T-cell (primary cell): ENCODE measurements at regions of chr4 and their contacts with region 1.

Region 1: DNA sequence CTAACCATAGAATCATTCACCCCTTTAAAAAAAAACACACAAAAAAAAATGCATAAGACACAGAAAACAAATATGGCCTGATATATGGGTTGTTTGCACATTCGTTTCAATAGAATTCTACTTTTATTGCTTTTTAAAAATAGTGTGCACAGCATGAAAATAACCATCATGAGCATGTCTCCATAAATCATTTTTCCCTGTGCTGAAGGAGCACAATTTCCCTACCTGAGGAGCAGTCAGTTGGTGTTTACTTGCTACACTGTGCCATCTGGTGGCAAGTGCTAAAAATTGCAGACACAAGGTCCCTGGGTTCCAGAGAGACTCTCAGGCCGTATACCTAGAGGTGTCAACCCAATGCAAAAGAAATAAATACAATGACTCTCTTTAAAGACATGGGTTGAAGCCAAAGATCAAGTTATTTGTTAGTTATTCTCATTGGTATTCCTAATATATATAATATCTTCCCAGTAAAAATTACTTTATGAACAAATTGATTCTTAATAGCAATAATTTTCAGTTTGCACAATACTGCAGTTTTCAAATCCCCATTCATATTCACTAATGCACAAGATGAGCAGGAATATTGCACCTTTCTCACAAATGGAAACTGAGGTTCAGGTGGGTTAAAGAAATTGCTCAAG is 551.4 kb downstream of the IQCM start:
- DNase-seq: peak in 1 of 35 experiments; percentile 22
- ATAC-seq: no peak
- H3K4me3 ChIP-seq: no peak overlapping the region
- H3K4me3 Mint-ChIP-seq: no peak overlapping the region
- H3K27ac ChIP-seq: no peak overlapping the region
- H3K27ac Mint-ChIP-seq: no peak overlapping the region
- H3K4me1 ChIP-seq: no peaks in the 10 kb centered on the region
- H3K4me1 Mint-ChIP-seq: no peaks in the 10 kb centered on the region
- H3K27me3 ChIP-seq: no peaks in the 10 kb centered on the region
- H3K27me3 Mint-ChIP-seq: no peaks in the 10 kb centered on the region

Region 2: GRCh38 chr4:148015058-148015457 is 1249.2 kb before region 1 on chr4:
- CTCF ChIA-PET with region 1: interaction called in 1 of 2 experiments, 10 read pairs
- POLR2A ChIA-PET with region 1: no interaction called
- DNase-seq: no peak
- ATAC-seq: no peak
- H3K4me3 ChIP-seq: no peak overlapping the region
- H3K4me3 Mint-ChIP-seq: no peak overlapping the region
- H3K27ac ChIP-seq: no peak overlapping the region
- H3K27ac Mint-ChIP-seq: no peak overlapping the region
- H3K4me1 ChIP-seq: no peaks in the 10 kb centered on the region
- H3K4me1 Mint-ChIP-seq: no peaks in the 10 kb centered on the region
- H3K27me3 ChIP-seq: no peaks in the 10 kb centered on the region
- H3K27me3 Mint-ChIP-seq: no peaks in the 10 kb centered on the region

Region 3: DNA sequence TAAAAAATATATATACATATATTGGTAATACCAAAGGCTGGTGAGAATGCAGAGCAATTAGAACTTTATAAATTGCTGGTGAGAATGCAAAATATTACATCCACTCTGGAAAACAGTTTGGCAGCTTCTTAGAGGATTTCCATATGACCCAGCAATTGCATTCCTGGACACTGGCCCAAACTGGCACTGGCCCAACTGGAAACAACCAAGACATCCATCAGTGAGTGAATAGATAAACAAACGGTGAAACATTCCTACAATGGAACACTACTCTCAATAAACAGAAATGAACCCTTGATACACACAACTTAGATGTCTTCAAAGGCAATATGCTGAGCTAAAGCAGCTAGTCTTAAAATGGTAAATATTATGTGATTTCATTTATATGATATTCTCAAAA is 27.2 kb after region 1 on chr4:
- CTCF ChIA-PET with region 1: no interaction called
- POLR2A ChIA-PET with region 1: no interaction called
- DNase-seq: no peak
- ATAC-seq: no peak
- H3K4me3 ChIP-seq: no peak overlapping the region
- H3K4me3 Mint-ChIP-seq: no peak overlapping the region
- H3K27ac ChIP-seq: no peak overlapping the region
- H3K27ac Mint-ChIP-seq: no peak overlapping the region
- H3K4me1 ChIP-seq: no peaks in the 10 kb centered on the region
- H3K4me1 Mint-ChIP-seq: no peaks in the 10 kb centered on the region
- H3K27me3 ChIP-seq: no peaks in the 10 kb centered on the region
- H3K27me3 Mint-ChIP-seq: no peaks in the 10 kb centered on the region